Naive thymus-derived CD4-positive, alpha-beta T cell (primary cell): ENCODE measurements at regions of chr14 and their contacts with region 1.

Region 1: DNA sequence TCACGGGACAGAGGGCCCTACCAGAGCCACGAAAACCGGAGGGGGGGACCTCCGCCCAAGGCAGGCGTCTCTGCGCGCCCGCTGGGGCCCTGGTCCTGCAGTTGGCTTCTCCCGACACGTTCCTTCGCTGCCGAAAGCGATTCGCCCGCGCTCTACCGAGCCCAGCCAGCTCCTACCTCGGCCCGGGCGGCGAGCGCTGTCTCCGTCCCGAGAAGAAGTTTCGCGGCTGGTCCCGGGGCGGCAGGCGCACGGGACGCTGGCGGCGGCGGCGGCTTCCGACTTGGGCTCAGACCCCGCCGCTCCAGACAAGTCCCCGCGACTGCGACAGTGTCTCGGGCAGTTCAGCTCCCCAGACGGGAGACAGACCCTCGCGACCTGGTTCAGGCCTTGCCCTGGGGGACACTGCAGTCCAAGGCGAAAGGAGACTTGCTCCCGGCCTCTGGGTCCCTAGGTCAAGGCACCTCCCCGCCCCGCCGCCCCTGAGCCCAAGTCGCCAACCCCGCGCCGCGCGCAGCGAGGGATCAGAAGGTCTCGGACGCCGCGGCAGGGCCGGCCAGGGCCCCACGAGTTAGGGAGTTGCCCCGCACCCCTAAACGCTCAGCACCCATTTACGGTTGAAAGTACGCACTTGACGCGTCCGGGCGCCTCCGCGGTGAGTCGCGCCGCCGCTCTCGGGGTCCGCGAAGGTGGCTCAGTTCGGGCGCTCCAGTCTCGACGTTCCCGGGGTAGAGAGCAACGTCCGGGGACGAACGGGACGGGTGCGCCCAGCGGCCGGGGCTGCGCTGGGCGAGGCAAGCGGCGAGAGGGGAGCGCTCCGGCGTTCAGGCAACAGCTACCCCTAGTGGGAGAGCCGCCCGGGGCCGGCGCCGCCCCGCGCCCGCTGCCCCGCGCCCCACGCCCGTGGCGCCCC is 1.4 kb upstream of the DIO3 start:
- DNase-seq: no peak
- ATAC-seq: no peak
- H3K4me3 ChIP-seq: no peak overlapping the region
- H3K4me3 Mint-ChIP-seq: peak overlapping the region in 1 of 10 donors; percentile 16
- H3K27ac ChIP-seq: no peak overlapping the region
- H3K27ac Mint-ChIP-seq: no peak overlapping the region
- H3K4me1 ChIP-seq: no peaks in the 10 kb centered on the region
- H3K4me1 Mint-ChIP-seq: peaks cover 0 to 10% (median 6%) of the 10 kb centered on the region in 7 donors
- H3K27me3 ChIP-seq: peaks cover 0 to 3% of the 10 kb centered on the region in 2 donors
- H3K27me3 Mint-ChIP-seq: peaks cover 40 to 61% (median 51%) of the 10 kb centered on the region in 5 donors

Region 2: DNA sequence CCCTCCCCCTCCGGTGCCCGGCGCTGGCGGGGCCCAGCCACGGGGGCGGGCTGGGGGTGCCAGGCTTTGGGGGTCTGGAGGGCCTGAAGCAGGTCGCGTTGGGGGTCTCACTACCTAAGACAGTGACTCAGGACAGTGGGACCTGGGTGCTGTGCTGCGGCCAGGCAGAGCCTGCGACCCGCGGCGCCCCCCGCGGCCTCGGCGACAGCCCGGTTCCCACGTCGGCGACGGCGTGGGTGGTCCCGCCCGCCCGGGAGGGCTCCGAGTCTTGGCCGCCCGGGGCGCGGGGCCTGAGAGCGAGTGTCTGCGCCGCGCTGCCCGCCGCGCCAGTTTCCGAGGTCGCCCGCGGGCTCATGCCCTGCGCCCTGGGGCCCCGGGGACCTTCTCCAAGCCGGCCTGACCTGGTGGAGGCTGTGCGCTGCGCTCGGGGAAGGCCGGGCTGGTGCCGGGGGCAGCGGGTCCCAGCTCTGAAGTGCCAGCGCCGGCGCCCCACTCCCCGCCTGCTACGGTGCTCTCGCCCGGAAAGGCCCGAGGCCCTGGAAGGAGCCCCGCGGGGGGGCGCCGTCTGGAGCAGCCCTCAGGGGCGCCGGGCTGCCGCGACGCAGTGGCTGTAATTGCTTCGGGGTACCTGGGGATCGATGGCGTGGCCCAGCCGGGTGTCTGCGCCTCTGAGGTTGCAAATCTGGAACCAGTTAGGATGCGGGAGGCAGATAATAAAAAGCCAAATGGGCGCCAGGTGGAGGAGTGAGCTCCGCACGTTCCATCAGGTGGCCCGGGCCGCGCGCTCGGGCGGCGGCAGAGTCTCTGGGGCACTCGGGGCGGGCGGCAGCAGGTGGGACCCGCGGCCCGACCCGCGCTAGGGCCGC is 101.1 kb before region 1 on chr14:
- CTCF ChIA-PET with region 1: no interaction called
- POLR2A ChIA-PET with region 1: no interaction called
- intact Hi-C with region 1: loop called in 1 of 2 experiments (anchors 10 kb)
- DNase-seq: peak in 1 of 9 donors; percentile 9
- ATAC-seq: no peak
- H3K4me3 ChIP-seq: no peak overlapping the region
- H3K4me3 Mint-ChIP-seq: peak overlapping the region in 4 of 10 donors; percentile 30 to 73 (median 48)
- H3K27ac ChIP-seq: no peak overlapping the region
- H3K27ac Mint-ChIP-seq: no peak overlapping the region
- H3K4me1 ChIP-seq: no peaks in the 10 kb centered on the region
- H3K4me1 Mint-ChIP-seq: peaks cover 0 to 21% (median 6%) of the 10 kb centered on the region in 7 donors
- H3K27me3 ChIP-seq: peaks cover 3 to 7% of the 10 kb centered on the region in 2 donors
- H3K27me3 Mint-ChIP-seq: peaks cover 46 to 58% (median 54%) of the 10 kb centered on the region in 5 donors